ENCODE measurements at regions of chr5 and their contacts with region 1.

Region 1: DNA sequence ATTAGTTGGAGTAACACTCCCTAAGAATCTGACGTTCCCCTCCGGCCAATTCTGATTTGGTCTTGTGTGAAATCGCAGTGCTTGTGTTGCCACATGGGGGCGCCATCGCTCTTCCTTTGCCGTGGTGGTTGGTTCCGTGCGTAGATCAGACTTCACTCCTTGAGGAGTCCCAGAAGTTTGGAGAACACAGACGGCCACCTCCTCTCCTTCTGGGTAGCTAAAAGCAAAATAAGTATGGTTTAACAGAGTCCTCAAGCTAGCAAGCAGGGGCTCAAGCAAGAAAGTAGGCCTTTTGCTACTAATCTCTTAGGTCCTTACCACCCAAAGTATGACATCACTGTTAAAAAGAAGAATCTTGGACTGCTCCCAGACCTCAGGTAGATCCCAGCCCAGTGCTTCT is 59.5 kb downstream of the HSPA4 start:
- DNase-seq: peak; percentile 54 to 79 (median 63)
- H3K4me3 ChIP-seq: no peak overlapping the region
- H3K4me3 Mint-ChIP-seq: peak overlapping the region in 3 of 7 donors; percentile 68 to 83 (median 69)
- H3K27ac ChIP-seq: no peak overlapping the region
- H3K27ac Mint-ChIP-seq: no peak overlapping the region
- H3K4me1 ChIP-seq: peaks cover 12% of the 10 kb centered on the region
- H3K4me1 Mint-ChIP-seq: peaks cover 12 to 23% (median 20%) of the 10 kb centered on the region in 3 donors
- H3K27me3 ChIP-seq: no peaks in the 10 kb centered on the region
- H3K27me3 Mint-ChIP-seq: peaks cover 2 to 3% of the 10 kb centered on the region in 2 donors

Region 2: DNA sequence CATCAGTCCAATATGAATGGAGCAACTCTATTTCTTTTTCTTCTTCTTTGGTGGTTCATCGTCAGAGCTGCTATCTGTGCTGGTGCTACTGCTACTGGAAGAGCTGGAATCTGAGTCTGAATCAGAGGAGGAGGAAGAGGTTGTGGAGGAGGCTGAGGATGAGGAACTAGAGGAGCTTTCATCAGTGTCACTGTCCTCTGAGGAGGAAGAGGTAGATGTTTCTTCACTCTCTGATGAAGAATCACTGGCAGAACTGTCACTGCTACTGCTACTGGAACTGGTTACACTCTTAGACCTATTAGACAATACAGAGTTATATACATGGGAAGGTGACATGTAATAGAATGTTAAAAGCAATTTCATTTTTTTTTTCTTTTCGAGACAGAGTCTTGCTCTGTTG is 112.7 kb before region 1 on chr5:
- CTCF ChIA-PET with region 1: no interaction called
- POLR2A ChIA-PET with region 1: no interaction called
- DNase-seq: no peak
- H3K4me3 ChIP-seq: no peak overlapping the region
- H3K4me3 Mint-ChIP-seq: no peak overlapping the region
- H3K27ac ChIP-seq: no peak overlapping the region
- H3K27ac Mint-ChIP-seq: peak overlapping the region in 3 of 8 donors; percentile 1 to 29 (median 12)
- H3K4me1 ChIP-seq: no peaks in the 10 kb centered on the region
- H3K4me1 Mint-ChIP-seq: peaks cover 0 to 2% (median 0%) of the 10 kb centered on the region in 3 donors
- H3K27me3 ChIP-seq: no peaks in the 10 kb centered on the region
- H3K27me3 Mint-ChIP-seq: no peaks in the 10 kb centered on the region

Region 3: GRCh38 chr5:133220851-133221674 is 109.8 kb after region 1 on chr5:
- CTCF ChIA-PET with region 1: interaction called, 15 read pairs
- POLR2A ChIA-PET with region 1: no interaction called
- DNase-seq: no peak
- H3K4me3 ChIP-seq: no peak overlapping the region
- H3K4me3 Mint-ChIP-seq: no peak overlapping the region
- H3K27ac ChIP-seq: no peak overlapping the region
- H3K27ac Mint-ChIP-seq: peak overlapping the region in 1 of 8 donors; percentile 80
- H3K4me1 ChIP-seq: no peaks in the 10 kb centered on the region
- H3K4me1 Mint-ChIP-seq: no peaks in the 10 kb centered on the region
- H3K27me3 ChIP-seq: peaks cover 4% of the 10 kb centered on the region
- H3K27me3 Mint-ChIP-seq: peaks cover 6 to 16% of the 10 kb centered on the region in 2 donors

Region 4: DNA sequence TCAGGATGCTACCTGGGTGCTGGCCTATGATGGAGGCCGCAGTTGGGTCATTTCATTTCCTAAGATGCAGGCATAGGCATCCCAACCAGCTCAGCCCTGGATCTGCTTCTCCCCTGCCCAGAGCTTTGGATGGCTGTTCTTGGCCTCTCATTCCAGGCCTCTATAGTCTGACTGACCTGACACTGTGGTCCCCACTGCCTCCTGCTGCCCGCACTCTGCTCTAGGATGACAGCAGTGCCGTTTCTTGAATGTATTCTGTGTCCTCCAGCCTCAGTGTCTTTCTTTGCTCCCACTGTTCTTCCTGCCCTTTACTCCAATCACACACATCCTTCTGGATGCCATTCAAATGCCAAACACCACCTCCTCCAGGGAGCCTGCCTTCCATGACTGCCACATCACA is 176.2 kb after region 1 on chr5:
- CTCF ChIA-PET with region 1: interaction called, 10 read pairs
- POLR2A ChIA-PET with region 1: no interaction called
- DNase-seq: peak in 1 of 5 donors; percentile 19
- H3K4me3 ChIP-seq: no peak overlapping the region
- H3K4me3 Mint-ChIP-seq: no peak overlapping the region
- H3K27ac ChIP-seq: no peak overlapping the region
- H3K27ac Mint-ChIP-seq: no peak overlapping the region
- H3K4me1 ChIP-seq: no peaks in the 10 kb centered on the region
- H3K4me1 Mint-ChIP-seq: no peaks in the 10 kb centered on the region
- H3K27me3 ChIP-seq: no peaks in the 10 kb centered on the region
- H3K27me3 Mint-ChIP-seq: peaks cover 0 to 3% of the 10 kb centered on the region in 2 donors